ENCODE measurements at regions of chr10 and their contacts with region 1.

Region 1: DNA sequence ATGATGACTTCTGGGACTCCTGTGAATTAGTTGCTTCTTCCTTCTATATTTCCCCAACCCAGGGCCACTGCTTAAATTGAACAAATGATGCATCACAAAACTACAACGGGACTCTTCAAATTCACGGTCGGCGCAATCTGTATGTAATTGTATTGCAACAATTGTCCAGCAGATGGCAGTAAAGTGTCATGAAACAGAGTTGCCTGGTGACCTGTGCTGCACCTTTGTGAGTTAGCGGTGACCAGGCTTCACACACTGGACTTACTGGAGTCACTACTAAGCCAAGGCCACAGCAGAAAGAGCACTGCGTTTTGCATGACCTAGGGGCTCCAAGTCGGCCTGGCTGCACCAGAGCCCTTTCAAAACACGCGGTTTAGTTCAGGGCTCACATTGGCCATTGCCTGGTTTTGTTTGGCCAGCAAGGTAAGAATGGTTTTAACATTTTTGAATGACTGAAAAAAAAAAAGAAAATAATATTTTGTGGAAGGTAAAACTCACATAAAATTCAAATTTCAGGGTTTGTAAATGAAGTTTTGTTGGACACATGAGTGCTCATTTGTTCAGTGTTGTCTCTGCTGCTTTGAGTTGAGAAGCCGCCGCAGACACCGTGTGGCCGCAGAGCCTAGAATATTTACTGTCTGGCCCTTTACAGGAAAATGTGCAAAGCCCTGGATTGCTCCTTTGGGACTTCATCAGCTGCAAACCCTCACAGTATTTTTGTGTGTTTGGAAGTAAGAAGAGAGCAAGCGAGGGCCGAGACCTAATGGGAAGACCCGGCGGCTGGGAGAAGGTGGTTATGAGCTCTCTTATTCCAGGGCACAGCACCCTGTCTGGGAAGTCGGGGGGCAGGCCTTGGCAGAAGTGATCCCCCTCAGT is 23.2 kb upstream of the ZNF32 start:
- DNase-seq: peak; percentile 40 to 60 (median 53)
- H3K4me3 ChIP-seq: no peak overlapping the region
- H3K27ac ChIP-seq: no peak overlapping the region
- H3K4me1 ChIP-seq: no peaks in the 10 kb centered on the region
- H3K27me3 ChIP-seq: no peaks in the 10 kb centered on the region
- CTCF ChIP-seq: peak; percentile 44 to 89 (median 80)
- EP300 ChIP-seq: no peak
- POLR2A ChIP-seq: no peak

Region 2: DNA sequence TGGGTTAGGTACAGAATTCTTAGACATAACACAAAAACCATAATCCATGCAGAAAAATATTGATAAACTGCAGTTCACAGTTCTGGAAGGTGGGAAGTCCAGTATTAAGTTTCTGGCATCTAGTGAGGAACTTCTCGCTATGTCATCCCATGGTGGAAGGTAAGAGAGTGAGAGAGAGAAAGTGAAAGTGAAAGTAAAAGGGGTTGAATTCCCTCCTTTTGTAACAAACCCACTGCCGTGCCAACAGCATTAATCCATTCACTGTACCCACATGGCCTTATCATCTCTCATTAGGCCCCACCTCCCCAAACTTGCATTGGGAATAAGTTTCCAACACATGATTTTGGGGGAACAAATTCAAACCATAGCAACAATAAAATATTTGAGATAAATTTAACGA is 48.5 kb before region 1 on chr10:
- intact Hi-C with region 1: no loop called
- DNase-seq: no peak
- H3K4me3 ChIP-seq: no peak overlapping the region
- H3K27ac ChIP-seq: no peak overlapping the region
- H3K4me1 ChIP-seq: no peaks in the 10 kb centered on the region
- H3K27me3 ChIP-seq: no peaks in the 10 kb centered on the region
- CTCF ChIP-seq: no peak
- EP300 ChIP-seq: no peak
- POLR2A ChIP-seq: no peak

Region 3: GRCh38 chr10:44857363-44858016 is 1185.6 kb after region 1 on chr10:
- intact Hi-C with region 1: loop called in 3 of 4 experiments (anchors 5 kb)
- DNase-seq: peak; percentile 62 to 86 (median 84)
- H3K4me3 ChIP-seq: no peak overlapping the region
- H3K27ac ChIP-seq: peak overlapping the region in 1 of 2 donors; percentile 16
- H3K4me1 ChIP-seq: peaks cover 2% of the 10 kb centered on the region
- H3K27me3 ChIP-seq: no peaks in the 10 kb centered on the region
- CTCF ChIP-seq: peak; percentile 89 to 98 (median 91)
- EP300 ChIP-seq: no peak
- POLR2A ChIP-seq: no peak

Region 4: GRCh38 chr10:44864637-44865288 is 1192.9 kb after region 1 on chr10:
- intact Hi-C with region 1: loop called (anchors 5 kb)
- DNase-seq: peak; percentile 88 to 96 (median 95)
- H3K4me3 ChIP-seq: peak overlapping the region; percentile 37
- H3K27ac ChIP-seq: peak overlapping the region in 1 of 2 donors; percentile 76
- H3K4me1 ChIP-seq: peaks cover 3% of the 10 kb centered on the region
- H3K27me3 ChIP-seq: no peaks in the 10 kb centered on the region
- CTCF ChIP-seq: peak; percentile 94 to 97 (median 97)
- EP300 ChIP-seq: no peak
- POLR2A ChIP-seq: no peak